ENCODE measurements at regions of chr10 and their contacts with region 1.

Region 1: GRCh38 chr10:11986593-11987216 is 55.9 kb downstream of the UPF2 start:
- DNase-seq: peak; percentile 87
- ATAC-seq: peak; percentile 65
- H3K4me3 Mint-ChIP-seq: no peak overlapping the region
- H3K27ac Mint-ChIP-seq: no peak overlapping the region
- H3K4me1 Mint-ChIP-seq: peaks cover 6% of the 10 kb centered on the region
- H3K27me3 Mint-ChIP-seq: no peaks in the 10 kb centered on the region
- CTCF ChIP-seq: peak; percentile 95

Region 2: GRCh38 chr10:11793762-11794479 is 192.8 kb before region 1 on chr10:
- CTCF ChIA-PET with region 1: interaction called, 16 read pairs
- POLR2A ChIA-PET with region 1: interaction called, 4 read pairs
- intact Hi-C with region 1: no loop called
- DNase-seq: no peak
- ATAC-seq: no peak
- H3K4me3 Mint-ChIP-seq: no peak overlapping the region
- H3K27ac Mint-ChIP-seq: no peak overlapping the region
- H3K4me1 Mint-ChIP-seq: no peaks in the 10 kb centered on the region
- H3K27me3 Mint-ChIP-seq: peaks cover 3% of the 10 kb centered on the region
- CTCF ChIP-seq: no peak

Region 3: DNA sequence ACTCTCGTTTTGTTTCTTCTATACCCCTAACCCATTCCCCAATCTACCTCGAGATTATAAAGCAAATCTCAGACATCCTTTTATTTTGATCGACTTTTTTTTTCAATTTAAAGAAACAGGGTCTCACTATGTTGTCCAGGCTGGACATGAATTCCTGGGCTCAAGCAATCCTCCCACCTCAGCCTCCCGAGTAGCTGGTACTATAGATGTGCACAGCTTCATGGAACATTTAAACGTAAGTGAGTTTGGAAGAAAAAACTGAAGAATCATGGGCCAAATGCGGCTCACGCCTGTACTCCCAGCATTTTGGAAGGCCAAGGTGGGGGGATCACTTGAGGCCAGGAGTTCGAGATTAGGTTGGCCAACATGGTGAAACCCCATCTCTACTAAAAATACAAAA is 40.1 kb before region 1 on chr10:
- CTCF ChIA-PET with region 1: interaction called, 11 read pairs
- POLR2A ChIA-PET with region 1: no interaction called
- intact Hi-C with region 1: no loop called
- DNase-seq: no peak
- ATAC-seq: no peak
- H3K4me3 Mint-ChIP-seq: no peak overlapping the region
- H3K27ac Mint-ChIP-seq: no peak overlapping the region
- H3K4me1 Mint-ChIP-seq: peaks cover 5% of the 10 kb centered on the region
- H3K27me3 Mint-ChIP-seq: no peaks in the 10 kb centered on the region
- CTCF ChIP-seq: no peak

Region 4: DNA sequence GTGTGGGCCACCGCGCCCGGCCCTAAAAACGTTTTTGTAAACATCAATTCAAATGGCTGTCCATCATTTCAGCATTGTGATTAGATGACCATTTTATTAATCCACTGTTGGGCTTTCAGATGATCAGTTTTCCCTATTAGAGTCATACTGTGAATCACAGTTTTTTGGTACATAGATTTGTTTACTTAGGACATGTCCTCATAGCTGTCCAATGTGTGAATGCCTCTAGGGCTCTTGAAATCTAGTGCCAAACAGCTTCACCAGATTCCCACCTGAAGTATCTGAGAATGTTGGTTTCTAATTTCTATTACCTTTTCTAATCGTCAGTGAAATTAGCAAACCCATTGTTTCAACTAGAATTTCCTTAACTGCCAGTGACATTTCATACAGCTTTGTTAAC is 10.9 kb before region 1 on chr10:
- CTCF ChIA-PET with region 1: interaction called, 21 read pairs
- POLR2A ChIA-PET with region 1: no interaction called
- intact Hi-C with region 1: no loop called
- DNase-seq: no peak
- ATAC-seq: no peak
- H3K4me3 Mint-ChIP-seq: no peak overlapping the region
- H3K27ac Mint-ChIP-seq: no peak overlapping the region
- H3K4me1 Mint-ChIP-seq: peaks cover 8% of the 10 kb centered on the region
- H3K27me3 Mint-ChIP-seq: no peaks in the 10 kb centered on the region
- CTCF ChIP-seq: no peak

Region 5: GRCh38 chr10:12195603-12196506 is 209.2 kb after region 1 on chr10 and contains the starts of genes CDC123 and NUDT5:
- CTCF ChIA-PET with region 1: no interaction called
- POLR2A ChIA-PET with region 1: no interaction called
- intact Hi-C with region 1: no loop called
- DNase-seq: peak; percentile 94
- ATAC-seq: peak; percentile 95
- H3K4me3 Mint-ChIP-seq: peak within 1 kb of the TSS; percentile 95
- H3K27ac Mint-ChIP-seq: peak within 1 kb of the TSS; percentile 99
- H3K4me1 Mint-ChIP-seq: peaks cover 50% of the 10 kb centered on the region
- H3K27me3 Mint-ChIP-seq: no peaks in the 10 kb centered on the region
- CTCF ChIP-seq: no peak
- total RNA-seq, gene CDC123: 123 to 125 TPM
- total RNA-seq, gene NUDT5: 95.9 to 98.6 TPM